ENCODE measurements at regions of chr18 and their contacts with region 1.

Region 1: DNA sequence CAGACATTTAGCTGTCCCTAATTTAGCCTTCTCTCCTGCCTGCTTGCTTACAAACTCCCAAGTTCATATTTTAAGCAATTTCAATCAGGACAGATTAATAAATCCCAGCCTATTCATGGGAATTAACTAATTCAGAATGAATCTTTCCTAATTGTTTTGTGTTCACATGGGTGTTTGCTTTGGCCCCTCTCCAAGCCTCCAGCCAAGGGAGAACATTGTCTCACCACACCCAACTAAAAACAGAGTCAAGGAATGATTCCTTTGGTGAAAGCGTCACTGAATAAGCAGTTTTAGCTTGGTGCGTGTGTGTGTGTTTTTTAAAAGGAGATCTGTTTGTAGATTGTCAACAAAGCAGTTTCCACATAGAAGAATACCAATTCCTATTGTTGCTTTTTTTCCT is 43.0 kb upstream of the DSG1 start:
- DNase-seq: peak; percentile 36
- ATAC-seq: peak; percentile 67
- H3K4me3 ChIP-seq: no peak overlapping the region
- H3K27ac ChIP-seq: peak overlapping the region; percentile 34; the same call in 1 of the 2 replicates
- H3K4me1 ChIP-seq: peaks cover 16% of the 10 kb centered on the region
- H3K27me3 ChIP-seq: no peaks in the 10 kb centered on the region
- CTCF ChIP-seq: no peak

Region 2: DNA sequence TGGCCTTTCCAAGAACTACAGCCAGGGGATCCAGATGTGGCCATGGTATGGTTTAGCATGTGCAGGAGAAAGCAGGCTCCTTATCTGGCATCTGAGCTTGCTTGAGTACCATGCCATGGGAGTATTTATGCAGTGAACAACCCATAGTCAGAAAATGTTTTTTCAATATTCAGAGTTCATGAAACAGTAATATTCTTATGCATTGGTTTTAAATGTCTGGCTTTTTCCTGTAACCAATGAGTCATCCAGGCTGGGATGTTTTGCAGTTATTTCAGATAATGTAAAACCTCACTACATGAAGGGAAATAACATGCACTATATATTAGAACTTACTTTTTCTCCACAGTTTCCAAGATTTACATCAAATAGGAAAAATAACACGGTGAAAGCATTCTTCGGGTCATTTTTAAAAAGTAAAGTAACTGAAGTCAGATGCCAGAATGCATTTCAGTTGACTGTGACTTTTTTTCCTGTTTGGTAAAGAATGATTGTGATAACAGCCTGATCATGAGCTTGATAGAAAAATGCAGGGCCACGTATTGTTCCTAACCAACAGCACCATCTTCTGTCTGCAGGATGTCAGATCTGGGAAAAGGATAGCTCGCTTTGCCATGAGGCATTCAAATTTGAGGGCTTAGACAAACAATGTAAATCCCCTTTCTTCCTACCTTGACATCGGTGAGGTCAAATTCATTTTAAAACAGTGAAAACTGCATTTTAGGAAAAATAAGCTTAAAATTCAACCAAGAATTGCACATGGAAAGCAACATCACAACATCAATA is 385.2 kb before region 1 on chr18:
- CTCF ChIA-PET with region 1: no interaction called
- POLR2A ChIA-PET with region 1: no interaction called
- intact Hi-C with region 1: no loop called
- DNase-seq: peak; percentile 60
- ATAC-seq: peak; percentile 77
- H3K4me3 ChIP-seq: no peak overlapping the region
- H3K27ac ChIP-seq: no peak overlapping the region
- H3K4me1 ChIP-seq: 0 out of 2 replicates have a peak, but pooled peaks cover 4% of the 10 kb centered on the region
- H3K27me3 ChIP-seq: peaks cover 6% of the 10 kb centered on the region; the same call in 1 of the 2 replicates
- CTCF ChIP-seq: peak; percentile 76

Region 3: GRCh38 chr18:31230495-31230894 is 44.4 kb before region 1 on chr18:
- CTCF ChIA-PET with region 1: no interaction called
- POLR2A ChIA-PET with region 1: no interaction called
- intact Hi-C with region 1: loop called (anchors 2 kb)
- DNase-seq: peak; percentile 80
- ATAC-seq: peak; percentile 96
- H3K4me3 ChIP-seq: 0 out of 2 replicates have a peak overlapping the region, but pooled peaks have one; percentile 30
- H3K27ac ChIP-seq: peak overlapping the region; percentile 90
- H3K4me1 ChIP-seq: peaks cover 17% of the 10 kb centered on the region
- H3K27me3 ChIP-seq: no peaks in the 10 kb centered on the region
- CTCF ChIP-seq: no peak

Measured in PC-3 (cell line).